Activated T-helper 1 cell treated with anti-CD3 and anti-CD28 coated beads, Interleukin-12 subunit alpha, Interleukin-12 subunit beta, Interleukin-2, Interleukin-4 antibody, amounts not matched to agents 30 ng/mL and 10 ng/mL and 1 ng/mL, durations not matched to agents 14 hours and 24 hours and 36 hours (primary cell): ENCODE measurements at regions of chr22 and their contacts with region 1.

Region 1: GRCh38 chr22:39917776-39918495 is 17.1 kb downstream of the GRAP2 start:
- DNase-seq: no peak
- H3K4me3 Mint-ChIP-seq: peak overlapping the region; percentile 67
- H3K27ac Mint-ChIP-seq: peak overlapping the region; percentile 77
- H3K4me1 Mint-ChIP-seq: peaks cover 88% of the 10 kb centered on the region
- H3K27me3 Mint-ChIP-seq: no peaks in the 10 kb centered on the region

Region 2: DNA sequence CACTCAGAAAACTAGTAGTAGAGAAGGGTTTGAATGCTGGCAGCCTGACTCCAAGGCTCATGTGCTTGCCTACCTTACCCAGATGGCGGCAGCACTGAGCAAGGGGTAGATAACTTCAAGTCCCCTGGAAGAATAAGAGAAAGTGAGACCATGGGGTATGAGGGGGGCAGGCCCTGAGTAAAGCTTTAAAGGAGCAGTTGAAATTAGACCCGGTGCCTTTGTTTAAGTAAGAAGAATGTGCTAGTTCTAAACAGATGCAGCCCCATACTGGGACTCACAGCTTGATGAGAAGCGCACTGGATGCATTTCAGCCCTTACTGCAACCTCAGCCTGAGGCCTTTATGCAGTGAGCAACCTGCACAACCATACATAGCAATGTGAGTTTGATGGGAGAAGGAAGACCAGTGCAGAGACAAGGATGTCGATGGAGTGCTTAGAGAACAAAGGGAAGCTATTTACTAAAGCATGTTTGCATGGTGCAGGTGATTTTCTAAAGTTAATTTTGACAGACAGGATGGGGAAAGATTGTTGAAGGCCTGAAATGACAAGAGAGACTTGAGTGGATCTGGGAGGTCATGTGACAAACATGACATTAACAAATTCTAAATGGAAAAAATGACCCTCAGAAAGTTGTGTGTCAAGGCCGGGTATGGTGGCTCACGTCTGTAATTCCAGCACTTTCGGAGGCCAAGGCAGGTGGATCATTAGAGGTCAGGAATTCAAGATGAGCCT is 15.1 kb after region 1 on chr22:
- intact Hi-C with region 1: loop called (anchors 1 kb)
- DNase-seq: no peak
- H3K4me3 Mint-ChIP-seq: peak overlapping the region; percentile 80
- H3K27ac Mint-ChIP-seq: peak overlapping the region; percentile 91
- H3K4me1 Mint-ChIP-seq: peaks cover 55% of the 10 kb centered on the region
- H3K27me3 Mint-ChIP-seq: no peaks in the 10 kb centered on the region